Endothelial cell of umbilical vein (primary cell): ENCODE measurements at regions of chr2 and their contacts with region 1.

Region 1: DNA sequence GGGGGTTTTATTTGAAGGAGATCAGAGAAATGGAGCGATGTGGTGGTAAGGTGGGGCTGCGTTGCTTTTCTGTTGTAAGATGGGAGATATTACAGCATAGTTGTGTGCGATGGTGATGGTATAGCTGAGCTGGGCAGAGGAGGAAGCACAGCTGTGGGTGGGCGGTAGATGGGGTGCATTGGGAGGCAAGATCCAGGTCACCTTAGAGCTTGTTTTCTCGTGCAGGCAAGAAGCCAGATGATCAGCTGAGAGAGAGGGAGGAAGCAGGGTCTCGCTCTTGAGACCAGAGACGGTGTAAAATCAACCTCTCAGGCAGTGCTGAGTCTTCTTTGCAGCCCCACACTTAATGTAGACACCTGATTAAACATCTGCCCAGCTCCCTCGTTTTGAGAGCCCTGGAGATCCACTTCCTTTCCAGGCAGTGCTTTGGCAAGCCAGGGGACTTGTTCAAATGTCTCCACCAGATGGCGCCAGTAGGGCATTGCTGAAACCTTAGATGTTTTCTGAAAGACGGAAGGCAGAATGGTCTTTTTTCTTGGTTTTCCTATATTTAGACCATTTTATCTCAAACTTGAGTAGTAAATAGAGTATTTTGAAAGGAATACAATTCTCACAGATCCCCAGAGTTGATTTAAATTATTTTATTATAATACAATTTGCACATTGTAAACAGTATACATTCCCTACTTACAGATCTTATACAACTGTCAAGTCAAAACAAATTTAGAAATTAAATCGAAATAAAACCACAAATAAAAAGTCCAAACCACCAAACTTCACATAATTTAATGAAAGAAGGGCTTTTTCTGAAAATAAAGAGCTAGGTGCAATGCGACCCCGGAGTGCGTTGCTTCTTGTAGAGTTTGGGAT is 21.1 kb upstream of the LYPD6B start:
- DNase-seq: peak; percentile 68
- H3K4me3 ChIP-seq: no peak overlapping the region
- H3K27ac ChIP-seq: no peak overlapping the region
- H3K4me1 ChIP-seq: no peaks in the 10 kb centered on the region
- H3K27me3 ChIP-seq: peaks cover 2 to 3% of the 10 kb centered on the region in 2 experiments
- CTCF ChIP-seq: peak; percentile 80 to 88
- POLR2A ChIP-seq: no peak

Region 2: DNA sequence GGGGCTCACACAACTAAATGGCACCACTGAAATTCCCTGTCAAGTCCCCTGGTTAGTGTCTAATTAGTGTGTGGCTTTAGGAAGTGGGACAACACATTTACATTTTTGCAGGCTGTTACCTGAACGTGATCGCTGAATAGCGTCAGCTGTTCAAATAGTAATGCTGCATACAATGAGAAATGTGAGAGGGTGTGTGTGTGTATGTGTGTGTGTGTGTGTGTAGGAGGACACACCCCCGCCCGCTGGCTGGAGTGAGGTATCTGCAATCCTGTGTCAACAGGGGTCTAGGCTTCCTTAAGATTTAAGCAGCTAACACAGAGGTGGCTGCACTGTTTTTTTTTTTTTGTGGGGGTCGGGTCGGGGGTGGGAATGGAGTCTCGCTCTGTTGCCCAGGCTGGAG is 16.4 kb after region 1 on chr2:
- CTCF ChIA-PET with region 1: interaction called, 58 read pairs
- POLR2A ChIA-PET with region 1: no interaction called
- dilution Hi-C with region 1: no loop called
- intact Hi-C with region 1: no loop called
- DNase-seq: no peak
- H3K4me3 ChIP-seq: no peak overlapping the region
- H3K27ac ChIP-seq: no peak overlapping the region
- H3K4me1 ChIP-seq: no peaks in the 10 kb centered on the region
- H3K27me3 ChIP-seq: peaks cover 12 to 13% of the 10 kb centered on the region in 2 experiments
- CTCF ChIP-seq: no peak
- POLR2A ChIP-seq: no peak

Region 3: GRCh38 chr2:149040451-149040850 is 23.1 kb after region 1 on chr2:
- CTCF ChIA-PET with region 1: interaction called, 10 read pairs
- POLR2A ChIA-PET with region 1: no interaction called
- dilution Hi-C with region 1: no loop called
- intact Hi-C with region 1: no loop called
- DNase-seq: peak; percentile 14
- H3K4me3 ChIP-seq: no peak overlapping the region
- H3K27ac ChIP-seq: no peak overlapping the region
- H3K4me1 ChIP-seq: no peaks in the 10 kb centered on the region
- H3K27me3 ChIP-seq: peaks cover 22% of the 10 kb centered on the region in 2 experiments
- CTCF ChIP-seq: peak; percentile 37 to 43
- POLR2A ChIP-seq: no peak

Region 4: DNA sequence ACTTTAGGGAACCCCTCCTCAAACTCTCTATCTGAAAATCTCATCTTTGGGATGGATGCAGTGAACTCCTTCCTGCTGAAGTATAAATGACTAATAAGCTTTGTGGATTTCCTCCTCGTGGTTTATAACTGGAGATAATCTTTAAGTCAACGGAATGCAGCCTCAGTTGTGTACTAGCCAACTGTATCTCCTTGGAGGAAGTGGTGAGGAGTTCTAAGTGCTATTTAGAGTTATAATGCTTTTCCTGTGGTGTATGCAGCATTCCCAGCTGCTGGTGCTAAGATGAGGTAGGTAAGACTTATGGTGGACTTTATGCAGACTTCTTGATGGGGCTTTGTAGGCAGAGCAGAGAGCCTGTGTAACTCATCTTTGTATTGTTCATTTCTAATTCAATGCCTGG is 112.1 kb after region 1 on chr2:
- CTCF ChIA-PET with region 1: no interaction called
- POLR2A ChIA-PET with region 1: no interaction called
- dilution Hi-C with region 1: no loop called
- intact Hi-C with region 1: no loop called
- DNase-seq: no peak
- H3K4me3 ChIP-seq: no peak overlapping the region
- H3K27ac ChIP-seq: no peak overlapping the region
- H3K4me1 ChIP-seq: no peaks in the 10 kb centered on the region
- H3K27me3 ChIP-seq: peaks cover 0 to 3% of the 10 kb centered on the region in 2 experiments
- CTCF ChIP-seq: no peak
- POLR2A ChIP-seq: no peak

Region 5: GRCh38 chr2:149313512-149313972 is 296.2 kb after region 1 on chr2:
- CTCF ChIA-PET with region 1: interaction called, 6 read pairs
- POLR2A ChIA-PET with region 1: no interaction called
- dilution Hi-C with region 1: no loop called
- intact Hi-C with region 1: loop called (anchors 1 kb)
- DNase-seq: peak; percentile 40
- H3K4me3 ChIP-seq: no peak overlapping the region
- H3K27ac ChIP-seq: no peak overlapping the region
- H3K4me1 ChIP-seq: no peaks in the 10 kb centered on the region
- H3K27me3 ChIP-seq: peaks cover 3 to 8% of the 10 kb centered on the region in 2 experiments
- CTCF ChIP-seq: peak; percentile 65 to 73
- POLR2A ChIP-seq: no peak

Region 6: GRCh38 chr2:149490296-149490695 is 472.9 kb after region 1 on chr2:
- CTCF ChIA-PET with region 1: interaction called, 18 read pairs
- POLR2A ChIA-PET with region 1: no interaction called
- dilution Hi-C with region 1: no loop called
- intact Hi-C with region 1: no loop called
- DNase-seq: peak; percentile 39
- H3K4me3 ChIP-seq: no peak overlapping the region
- H3K27ac ChIP-seq: no peak overlapping the region
- H3K4me1 ChIP-seq: no peaks in the 10 kb centered on the region
- H3K27me3 ChIP-seq: peaks cover 0 to 3% of the 10 kb centered on the region in 2 experiments
- CTCF ChIP-seq: peak in 1 of 2 donors; percentile 6
- POLR2A ChIP-seq: no peak

Region 7: DNA sequence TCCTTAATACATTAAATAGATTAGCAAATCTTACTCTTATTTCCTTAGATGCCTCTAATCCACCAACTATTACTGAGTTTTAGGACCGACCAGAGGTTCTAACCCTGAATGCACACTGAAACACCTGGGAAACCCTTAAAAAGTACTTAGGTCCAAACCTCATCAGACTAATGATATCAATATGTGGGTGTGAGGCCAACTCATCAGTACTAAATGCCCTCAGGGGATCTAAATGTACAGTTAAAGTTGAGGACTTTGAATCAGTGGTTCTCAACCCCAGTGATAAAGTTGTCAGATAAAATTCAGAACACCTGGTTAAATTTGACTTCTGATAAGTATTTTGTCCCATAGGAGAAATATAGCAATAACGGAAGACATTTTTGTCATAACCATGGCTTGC is 549.3 kb after region 1 on chr2:
- CTCF ChIA-PET with region 1: interaction called, 212 read pairs
- POLR2A ChIA-PET with region 1: no interaction called
- dilution Hi-C with region 1: no loop called
- intact Hi-C with region 1: loop called (anchors 1 kb)
- DNase-seq: no peak
- H3K4me3 ChIP-seq: no peak overlapping the region
- H3K27ac ChIP-seq: no peak overlapping the region
- H3K4me1 ChIP-seq: peaks cover 13% of the 10 kb centered on the region
- H3K27me3 ChIP-seq: no peaks in the 10 kb centered on the region
- CTCF ChIP-seq: no peak
- POLR2A ChIP-seq: no peak

Region 8: DNA sequence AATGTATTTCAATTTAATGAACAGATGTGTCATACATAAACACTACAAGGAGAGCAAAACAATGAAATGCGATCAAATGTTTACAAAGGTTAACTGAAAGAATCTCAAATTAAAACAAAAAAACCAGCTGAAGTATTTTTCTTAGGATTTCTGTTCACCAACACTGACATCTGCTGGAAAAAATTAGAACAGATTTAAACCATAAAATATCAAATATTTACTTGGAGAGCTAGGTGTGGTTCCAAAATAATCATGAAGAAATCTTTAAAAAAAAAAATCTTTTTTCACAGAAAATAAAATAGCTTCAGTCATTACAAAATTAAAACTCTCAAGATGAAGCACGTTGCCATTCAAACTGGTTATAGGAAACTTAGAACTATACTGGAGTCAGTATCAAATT is 556.4 kb after region 1 on chr2:
- CTCF ChIA-PET with region 1: interaction called, 132 read pairs
- POLR2A ChIA-PET with region 1: no interaction called
- dilution Hi-C with region 1: no loop called
- intact Hi-C with region 1: no loop called
- DNase-seq: peak; percentile 13
- H3K4me3 ChIP-seq: no peak overlapping the region
- H3K27ac ChIP-seq: no peak overlapping the region
- H3K4me1 ChIP-seq: no peaks in the 10 kb centered on the region
- H3K27me3 ChIP-seq: no peaks in the 10 kb centered on the region
- CTCF ChIP-seq: peak in 1 of 2 donors; percentile 4
- POLR2A ChIP-seq: no peak

Region 9: GRCh38 chr2:149885468-149885867 is 868.1 kb after region 1 on chr2:
- CTCF ChIA-PET with region 1: no interaction called
- POLR2A ChIA-PET with region 1: no interaction called
- dilution Hi-C with region 1: no loop called
- intact Hi-C with region 1: no loop called
- DNase-seq: no peak
- H3K4me3 ChIP-seq: no peak overlapping the region
- H3K27ac ChIP-seq: no peak overlapping the region
- H3K4me1 ChIP-seq: no peaks in the 10 kb centered on the region
- H3K27me3 ChIP-seq: no peaks in the 10 kb centered on the region
- CTCF ChIP-seq: no peak
- POLR2A ChIP-seq: no peak